A549 (cell line): ENCODE measurements at regions of chr14 and their contacts with region 1.

Region 1: GRCh38 chr14:68191567-68192321 is 372.2 kb downstream of the RAD51B start:
- DNase-seq: peak; percentile 62 to 99
- ATAC-seq: peak; percentile 98
- H3K4me3 ChIP-seq: peak overlapping the region; percentile 6; the same call in 1 of the 3 replicates
- H3K27ac ChIP-seq: peak overlapping the region; percentile 93 to 98
- H3K4me1 ChIP-seq: peaks cover 66% of the 10 kb centered on the region
- CTCF ChIP-seq: no peak; the same call in 2 of the 3 replicates
- EP300 ChIP-seq: peak; percentile 98 to 99
- POLR2A ChIP-seq: no peak
- RAD21 ChIP-seq: peak; percentile 60 to 85

Region 2: DNA sequence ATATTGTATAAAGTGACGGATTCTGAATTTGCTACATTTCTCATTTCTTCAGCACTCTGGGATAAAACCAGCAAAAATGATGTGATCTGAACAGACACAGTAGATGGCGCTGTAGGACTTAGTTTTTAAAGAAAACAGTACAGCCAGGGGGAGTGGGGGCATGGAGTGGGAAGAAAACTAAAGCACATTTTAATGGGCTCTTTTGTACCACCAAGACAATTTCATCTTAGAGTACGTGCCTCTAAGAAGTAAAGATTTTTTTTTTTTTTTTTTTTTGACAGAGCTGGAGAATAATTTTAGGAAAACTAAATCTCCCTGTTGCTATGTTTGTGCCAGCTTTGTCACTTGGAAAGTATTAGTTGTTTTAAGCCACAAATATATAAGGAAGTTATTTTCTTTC is 247.8 kb before region 1 on chr14:
- CTCF ChIA-PET with region 1: interaction called, 4 read pairs
- POLR2A ChIA-PET with region 1: interaction called, 13 read pairs
- DNase-seq: peak; percentile 44 to 92
- ATAC-seq: peak; percentile 88 to 89
- H3K4me3 ChIP-seq: no peak overlapping the region
- H3K27ac ChIP-seq: peak overlapping the region; percentile 82 to 86
- H3K4me1 ChIP-seq: peaks cover 51% of the 10 kb centered on the region
- CTCF ChIP-seq: peak; percentile 93
- EP300 ChIP-seq: peak in 1 of 2 experiments; percentile 18; a peak in 1 of 5 replicates
- POLR2A ChIP-seq: no peak
- RAD21 ChIP-seq: peak; percentile 96 to 98

Region 3: DNA sequence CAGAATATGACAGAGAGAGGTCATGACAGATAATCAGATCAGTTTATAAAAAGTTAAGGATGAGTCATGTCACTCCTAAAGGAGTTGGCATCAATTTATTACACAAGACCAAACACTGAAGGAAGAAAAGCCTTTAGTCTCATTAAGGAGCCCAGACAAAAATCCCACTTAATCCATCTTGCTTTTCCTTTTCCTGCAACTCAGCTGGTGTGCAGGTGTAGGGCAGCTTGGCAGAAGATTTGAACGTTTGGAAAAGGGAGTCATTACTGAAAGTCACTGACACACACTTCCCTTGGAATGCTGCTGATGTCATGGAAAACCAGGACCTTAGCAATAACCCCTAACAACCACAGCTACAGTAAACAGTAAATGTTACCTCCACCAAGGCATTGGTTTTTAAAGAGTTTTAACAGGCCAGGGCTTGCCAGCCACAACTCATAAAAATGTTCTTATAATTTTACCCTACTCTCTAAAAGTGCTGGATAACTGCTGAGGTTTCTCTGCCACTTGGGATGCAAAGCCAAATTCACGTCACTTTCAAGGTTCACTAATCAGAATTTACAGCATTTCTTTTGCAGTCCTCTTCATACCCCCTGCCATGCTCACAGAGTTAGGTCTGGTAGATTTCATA is 51.5 kb before region 1 on chr14:
- CTCF ChIA-PET with region 1: interaction called, 4 read pairs
- POLR2A ChIA-PET with region 1: interaction called, 24 read pairs
- DNase-seq: peak; percentile 70 to 99
- ATAC-seq: peak; percentile 81 to 86
- H3K4me3 ChIP-seq: no peak overlapping the region
- H3K27ac ChIP-seq: peak overlapping the region; percentile 93 to 98
- H3K4me1 ChIP-seq: peaks cover 90% of the 10 kb centered on the region
- CTCF ChIP-seq: no peak
- EP300 ChIP-seq: peak; percentile 97 to 99
- POLR2A ChIP-seq: no peak
- RAD21 ChIP-seq: peak; percentile 55 to 79

Region 4: DNA sequence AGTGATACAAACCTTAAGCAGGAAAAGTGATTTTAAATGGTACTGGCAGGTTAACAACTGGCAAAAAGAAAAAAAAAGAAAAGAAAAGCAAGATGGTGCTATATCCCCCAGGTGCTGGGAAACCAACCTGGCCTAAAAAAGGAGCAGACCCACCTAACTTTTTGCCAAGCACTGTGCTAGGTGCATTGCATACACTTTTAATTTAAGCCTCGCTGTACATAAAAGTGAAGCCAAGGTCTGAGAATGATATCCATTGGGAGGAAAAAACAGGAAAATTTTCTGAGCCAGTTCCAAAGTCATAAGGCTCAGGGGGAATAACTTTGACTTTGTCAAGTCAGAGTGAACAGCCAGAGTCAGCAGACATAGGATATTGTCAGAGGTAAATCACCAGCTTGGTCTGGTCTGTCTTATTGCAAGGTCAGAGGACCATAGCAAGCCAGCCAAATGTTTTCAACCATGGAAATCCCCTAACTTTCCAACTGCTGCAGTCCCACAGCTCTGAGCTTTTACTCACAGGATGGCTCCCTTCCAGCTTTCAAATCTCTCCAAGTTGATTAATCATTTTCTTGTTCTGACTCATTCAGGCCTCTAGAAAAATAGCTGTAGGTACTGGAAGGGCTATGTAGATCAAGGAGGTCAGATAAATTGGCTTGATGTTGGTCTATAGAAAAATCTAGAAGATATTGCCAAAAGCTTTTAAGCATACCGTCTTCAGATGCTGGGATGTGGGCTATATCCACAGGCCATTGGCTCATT is 40.7 kb after region 1 on chr14:
- CTCF ChIA-PET with region 1: interaction called, 4 read pairs
- POLR2A ChIA-PET with region 1: interaction called, 28 read pairs
- DNase-seq: peak; percentile 77 to 98
- ATAC-seq: peak; percentile 96
- H3K4me3 ChIP-seq: no peak overlapping the region
- H3K27ac ChIP-seq: peak overlapping the region; percentile 95 to 96
- H3K4me1 ChIP-seq: peaks cover 62% of the 10 kb centered on the region
- CTCF ChIP-seq: no peak
- EP300 ChIP-seq: peak; percentile 92 to 98
- POLR2A ChIP-seq: no peak
- RAD21 ChIP-seq: peak; percentile 40 to 64

Region 5: GRCh38 chr14:68458840-68459469 is 267.2 kb after region 1 on chr14:
- CTCF ChIA-PET with region 1: interaction called, 3 read pairs
- POLR2A ChIA-PET with region 1: interaction called, 24 read pairs
- DNase-seq: peak; percentile 96 to 100
- ATAC-seq: peak; percentile 98 to 99
- H3K4me3 ChIP-seq: no peak overlapping the region
- H3K27ac ChIP-seq: peak overlapping the region; percentile 95 to 100
- H3K4me1 ChIP-seq: peaks cover 59% of the 10 kb centered on the region
- CTCF ChIP-seq: no peak
- EP300 ChIP-seq: peak; percentile 99
- POLR2A ChIP-seq: no peak
- RAD21 ChIP-seq: peak; percentile 52 to 92